Ovary (tissue), 10 donors: ENCODE measurements at regions of chr7 and their contacts with region 1.

Region 1: DNA sequence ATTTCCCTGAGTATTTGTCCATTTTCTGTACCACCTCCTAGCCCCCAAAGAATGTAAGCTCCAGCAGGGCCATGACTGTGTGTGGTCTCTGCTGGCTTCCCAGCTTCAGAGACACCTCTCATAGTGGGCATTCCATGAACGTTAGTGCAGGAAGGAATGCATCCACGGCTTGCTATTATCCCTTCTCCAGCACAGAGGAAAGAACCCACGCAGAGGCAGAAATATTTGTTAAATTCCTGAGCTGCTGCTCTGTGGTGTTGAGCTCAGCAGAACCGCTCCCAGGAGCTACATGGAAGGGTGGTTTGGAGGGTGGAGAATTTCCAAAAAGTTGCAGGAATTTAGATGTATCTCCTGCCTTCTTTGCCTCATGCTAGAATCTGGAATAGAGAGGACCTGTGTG is 275.2 kb downstream of the POU6F2 start:
- DNase-seq: no peak
- H3K4me3 ChIP-seq: no peak overlapping the region
- H3K27ac ChIP-seq: no peak overlapping the region
- H3K4me1 ChIP-seq: no peaks in the 10 kb centered on the region
- H3K27me3 ChIP-seq: no peaks in the 10 kb centered on the region
- CTCF ChIP-seq: no peak
- EP300 ChIP-seq: no peak
- POLR2A ChIP-seq: no peak

Region 2: DNA sequence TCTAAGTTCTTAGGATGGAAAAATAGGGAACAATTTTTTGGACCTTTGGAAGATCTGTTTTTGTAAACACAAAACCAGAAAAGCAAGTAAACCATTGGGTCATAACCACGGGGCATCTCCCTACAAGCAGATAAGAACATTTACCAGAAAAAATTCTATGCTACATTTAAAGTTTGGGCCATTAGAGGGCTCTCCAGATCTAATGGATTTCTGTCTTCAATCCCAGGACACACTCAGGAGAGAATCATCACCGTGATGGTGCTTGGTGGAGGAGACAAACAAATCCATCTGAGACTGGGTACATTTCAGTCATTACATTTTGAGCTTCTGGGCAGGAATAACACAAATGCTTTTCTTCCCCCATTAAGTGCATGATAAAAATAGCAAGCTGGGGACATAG is 801.1 kb before region 1 on chr7:
- intact Hi-C with region 1: loop called in 1 of 4 experiments (anchors 5 kb)
- DNase-seq: no peak
- H3K4me3 ChIP-seq: no peak overlapping the region
- H3K27ac ChIP-seq: no peak overlapping the region
- H3K4me1 ChIP-seq: no peaks in the 10 kb centered on the region
- H3K27me3 ChIP-seq: no peaks in the 10 kb centered on the region
- CTCF ChIP-seq: no peak
- EP300 ChIP-seq: no peak
- POLR2A ChIP-seq: no peak